CD14-positive monocyte (primary cell): ENCODE measurements at regions of chr3 and their contacts with region 1.

Region 1: GRCh38 chr3:98602078-98602678 is 8.8 kb upstream of the CPOX start:
- DNase-seq: peak in 2 of 3 donors; percentile 42 to 48
- H3K4me3 ChIP-seq: no peak overlapping the region
- H3K4me3 Mint-ChIP-seq: no peak overlapping the region
- H3K27ac ChIP-seq: no peak overlapping the region
- H3K27ac Mint-ChIP-seq: no peak overlapping the region
- H3K4me1 ChIP-seq: peaks cover 31 to 33% of the 10 kb centered on the region in 2 donors
- H3K4me1 Mint-ChIP-seq: peaks cover 32% of the 10 kb centered on the region
- H3K27me3 ChIP-seq: no peaks in the 10 kb centered on the region
- H3K27me3 Mint-ChIP-seq: peaks cover 0 to 3% (median 0%) of the 10 kb centered on the region in 3 donors
- CTCF ChIP-seq: peak; percentile 85

Region 2: DNA sequence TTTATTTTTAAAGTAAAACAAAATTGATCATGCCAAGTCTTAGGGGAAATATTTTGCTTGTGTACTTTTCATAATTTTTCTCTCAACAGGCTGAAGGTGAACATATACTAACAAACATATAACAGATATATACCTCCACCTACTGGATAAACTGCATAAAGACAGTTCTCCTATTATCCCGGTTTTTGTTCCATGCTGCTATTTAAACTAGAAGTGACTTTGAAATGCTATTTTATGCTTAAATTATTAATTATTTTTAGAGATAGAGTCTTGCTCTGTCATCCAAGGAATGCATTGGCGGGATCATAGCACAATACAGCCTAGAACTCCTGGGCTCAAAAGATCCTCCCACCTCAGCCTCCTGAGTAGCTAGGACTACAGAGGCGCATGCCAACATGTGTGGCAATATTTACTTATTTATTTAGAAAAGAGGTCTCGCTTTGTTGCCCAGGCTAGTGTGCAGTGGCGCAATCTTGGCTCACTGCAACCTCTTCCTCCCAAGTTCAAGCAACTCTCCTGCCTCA is 210.7 kb after region 1 on chr3:
- intact Hi-C with region 1: loop called (anchors 2 to 5 kb)
- DNase-seq: peak; percentile 9 to 65 (median 40)
- H3K4me3 ChIP-seq: no peak overlapping the region
- H3K4me3 Mint-ChIP-seq: no peak overlapping the region
- H3K27ac ChIP-seq: no peak overlapping the region
- H3K27ac Mint-ChIP-seq: no peak overlapping the region
- H3K4me1 ChIP-seq: peaks cover 18 to 21% of the 10 kb centered on the region in 2 donors
- H3K4me1 Mint-ChIP-seq: peaks cover 22% of the 10 kb centered on the region
- H3K27me3 ChIP-seq: no peaks in the 10 kb centered on the region
- H3K27me3 Mint-ChIP-seq: peaks cover 0 to 1% (median 0%) of the 10 kb centered on the region in 3 donors
- CTCF ChIP-seq: peak; percentile 91